ENCODE measurements at regions of chrX and their contacts with region 1.

Region 1: GRCh38 chrX:100685284-100685996 is 41.4 kb downstream of the SRPX2 start:
- DNase-seq: peak; percentile 53
- ATAC-seq: peak; percentile 97
- H3K4me3 ChIP-seq: no peak overlapping the region
- H3K27ac ChIP-seq: no peak overlapping the region
- H3K4me1 ChIP-seq: peaks cover 7% of the 10 kb centered on the region; the same call in 1 of the 2 replicates
- H3K27me3 ChIP-seq: no peaks in the 10 kb centered on the region; a peak in 1 of 4 replicates
- CTCF ChIP-seq: peak; percentile 79 to 94 (median 90)
- EP300 ChIP-seq: no peak
- POLR2A ChIP-seq: no peak
- RAD21 ChIP-seq: peak; percentile 98

Region 2: DNA sequence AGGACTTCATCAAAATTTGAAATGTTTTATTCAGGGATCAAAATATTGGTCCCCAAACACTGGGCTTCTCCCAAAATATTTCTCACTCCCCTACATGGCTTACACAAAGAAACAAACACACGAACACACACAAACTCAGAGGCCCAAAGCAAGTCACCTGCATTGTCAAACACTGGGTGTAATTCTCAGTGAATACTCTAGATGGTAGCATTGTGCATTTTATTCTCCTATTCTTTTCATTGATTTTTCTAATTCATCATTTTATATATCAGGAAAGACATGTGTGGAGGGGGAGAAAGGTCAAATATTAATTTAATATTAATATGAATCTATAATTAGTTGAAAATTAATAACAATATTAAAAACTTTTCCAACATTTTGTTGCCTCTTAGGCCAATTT is 173.0 kb before region 1 on chrX:
- CTCF ChIA-PET with region 1: interaction called, 10 read pairs
- POLR2A ChIA-PET with region 1: no interaction called
- RAD21 ChIA-PET with region 1: interaction called, 4 read pairs
- SMC1A ChIA-PET with region 1: interaction called, 3 read pairs
- in situ Hi-C with region 1: no loop called
- intact Hi-C with region 1: loop called (anchors 1 kb)
- DNase-seq: no peak
- ATAC-seq: peak; percentile 59
- H3K4me3 ChIP-seq: no peak overlapping the region
- H3K27ac ChIP-seq: no peak overlapping the region
- H3K4me1 ChIP-seq: no peaks in the 10 kb centered on the region
- H3K27me3 ChIP-seq: no peaks in the 10 kb centered on the region
- CTCF ChIP-seq: peak; percentile 41 to 68 (median 53); a peak in 5 of 6 replicates
- EP300 ChIP-seq: no peak
- POLR2A ChIP-seq: no peak
- RAD21 ChIP-seq: peak; percentile 40

Region 3: GRCh38 chrX:100591256-100592051 is 94.0 kb before region 1 on chrX:
- CTCF ChIA-PET with region 1: no interaction called
- POLR2A ChIA-PET with region 1: no interaction called
- RAD21 ChIA-PET with region 1: no interaction called
- SMC1A ChIA-PET with region 1: no interaction called
- in situ Hi-C with region 1: no loop called
- intact Hi-C with region 1: no loop called
- DNase-seq: no peak
- ATAC-seq: no peak
- H3K4me3 ChIP-seq: no peak overlapping the region
- H3K27ac ChIP-seq: no peak overlapping the region
- H3K4me1 ChIP-seq: no peaks in the 10 kb centered on the region
- H3K27me3 ChIP-seq: no peaks in the 10 kb centered on the region
- CTCF ChIP-seq: no peak
- EP300 ChIP-seq: no peak
- POLR2A ChIP-seq: no peak
- RAD21 ChIP-seq: no peak

Region 4: GRCh38 chrX:100659431-100660137 is 25.9 kb before region 1 on chrX:
- CTCF ChIA-PET with region 1: no interaction called
- POLR2A ChIA-PET with region 1: no interaction called
- RAD21 ChIA-PET with region 1: no interaction called
- SMC1A ChIA-PET with region 1: no interaction called
- in situ Hi-C with region 1: no loop called
- intact Hi-C with region 1: no loop called
- DNase-seq: no peak
- ATAC-seq: no peak
- H3K4me3 ChIP-seq: no peak overlapping the region
- H3K27ac ChIP-seq: no peak overlapping the region
- H3K4me1 ChIP-seq: no peaks in the 10 kb centered on the region
- H3K27me3 ChIP-seq: no peaks in the 10 kb centered on the region
- CTCF ChIP-seq: no peak
- EP300 ChIP-seq: no peak
- POLR2A ChIP-seq: no peak
- RAD21 ChIP-seq: no peak

Region 5: GRCh38 chrX:100674705-100675104 is 10.7 kb before region 1 on chrX:
- CTCF ChIA-PET with region 1: interaction called, 15 read pairs
- POLR2A ChIA-PET with region 1: no interaction called
- RAD21 ChIA-PET with region 1: interaction called, 3 read pairs
- SMC1A ChIA-PET with region 1: interaction called, 5 read pairs
- in situ Hi-C with region 1: no loop called
- intact Hi-C with region 1: no loop called
- DNase-seq: no peak
- ATAC-seq: peak; percentile 34
- H3K4me3 ChIP-seq: no peak overlapping the region
- H3K27ac ChIP-seq: no peak overlapping the region
- H3K4me1 ChIP-seq: no peaks in the 10 kb centered on the region
- H3K27me3 ChIP-seq: no peaks in the 10 kb centered on the region
- CTCF ChIP-seq: no peak
- EP300 ChIP-seq: no peak
- POLR2A ChIP-seq: no peak
- RAD21 ChIP-seq: no peak

Region 6: DNA sequence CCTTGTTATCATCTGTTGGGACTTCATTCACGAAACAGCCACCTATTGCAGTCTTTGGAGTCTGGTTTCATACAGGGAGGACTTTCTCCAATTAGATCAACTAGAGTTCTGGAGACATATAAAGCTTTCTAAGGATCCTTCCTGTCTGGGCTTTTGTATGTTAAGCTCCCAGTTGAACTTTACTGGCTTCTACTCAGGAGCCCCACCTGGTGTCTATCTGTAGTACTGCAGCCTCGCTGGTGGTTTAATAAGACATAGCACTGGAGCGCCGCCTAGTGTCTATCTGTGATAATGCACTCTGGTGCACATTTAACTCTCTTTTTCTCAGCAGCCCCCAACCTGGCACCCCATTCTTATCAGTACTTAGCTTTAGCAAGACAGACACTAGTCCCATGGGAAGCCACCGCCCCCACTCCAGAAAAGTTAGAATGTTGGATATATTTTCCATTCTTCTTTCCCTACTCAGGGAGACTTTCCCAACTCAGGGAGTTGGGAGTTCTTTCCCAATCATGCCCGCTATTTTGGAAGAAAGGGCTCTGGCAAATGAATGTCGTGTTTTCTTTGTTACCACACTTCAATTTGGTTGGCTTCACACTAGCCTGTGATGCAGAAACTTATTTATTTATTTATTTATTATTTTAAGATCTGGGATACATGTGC is 83.4 kb after region 1 on chrX:
- CTCF ChIA-PET with region 1: interaction called, 128 read pairs
- POLR2A ChIA-PET with region 1: no interaction called
- RAD21 ChIA-PET with region 1: interaction called, 22 read pairs
- SMC1A ChIA-PET with region 1: interaction called, 22 read pairs
- in situ Hi-C with region 1: loop called (anchors 5 kb)
- intact Hi-C with region 1: loop called (anchors 1 kb)
- DNase-seq: peak; percentile 34
- ATAC-seq: peak; percentile 77
- H3K4me3 ChIP-seq: no peak overlapping the region
- H3K27ac ChIP-seq: no peak overlapping the region
- H3K4me1 ChIP-seq: no peaks in the 10 kb centered on the region
- H3K27me3 ChIP-seq: no peaks in the 10 kb centered on the region
- CTCF ChIP-seq: peak; percentile 100; a peak in 5 of 6 replicates
- EP300 ChIP-seq: no peak
- POLR2A ChIP-seq: no peak
- RAD21 ChIP-seq: peak; percentile 98

Region 7: GRCh38 chrX:101206471-101206870 is 521.0 kb after region 1 on chrX:
- CTCF ChIA-PET with region 1: no interaction called
- POLR2A ChIA-PET with region 1: no interaction called
- RAD21 ChIA-PET with region 1: no interaction called
- SMC1A ChIA-PET with region 1: no interaction called
- in situ Hi-C with region 1: no loop called
- intact Hi-C with region 1: loop called (anchors 5 kb)
- DNase-seq: no peak
- ATAC-seq: peak; percentile 89
- H3K4me3 ChIP-seq: no peak overlapping the region
- H3K27ac ChIP-seq: no peak overlapping the region
- H3K4me1 ChIP-seq: no peaks in the 10 kb centered on the region
- H3K27me3 ChIP-seq: no peaks in the 10 kb centered on the region
- CTCF ChIP-seq: peak; percentile 41 to 55 (median 46); a peak in 5 of 6 replicates
- EP300 ChIP-seq: no peak
- POLR2A ChIP-seq: no peak
- RAD21 ChIP-seq: peak; percentile 69

Region 8: GRCh38 chrX:101287402-101287801 is 602.0 kb after region 1 on chrX:
- CTCF ChIA-PET with region 1: interaction called, 6 read pairs
- POLR2A ChIA-PET with region 1: no interaction called
- RAD21 ChIA-PET with region 1: no interaction called
- SMC1A ChIA-PET with region 1: no interaction called
- in situ Hi-C with region 1: no loop called
- intact Hi-C with region 1: loop called (anchors 5 kb)
- DNase-seq: peak; percentile 3
- ATAC-seq: peak; percentile 80
- H3K4me3 ChIP-seq: no peak overlapping the region
- H3K27ac ChIP-seq: no peak overlapping the region
- H3K4me1 ChIP-seq: no peaks in the 10 kb centered on the region
- H3K27me3 ChIP-seq: no peaks in the 10 kb centered on the region
- CTCF ChIP-seq: peak; percentile 55 to 58 (median 57); a peak in 5 of 6 replicates
- EP300 ChIP-seq: no peak
- POLR2A ChIP-seq: no peak
- RAD21 ChIP-seq: peak; percentile 62

Measured in GM12878 (cell line).